PC-9 (cell line): ENCODE measurements at regions of chr18 and their contacts with region 1.

Region 1: GRCh38 chr18:1133541-1133940 is 228.9 kb downstream of the ADCYAP1 start:
- DNase-seq: no peak
- H3K4me3 ChIP-seq: no peak overlapping the region
- H3K27ac ChIP-seq: no peak overlapping the region
- H3K4me1 ChIP-seq: no peaks in the 10 kb centered on the region
- H3K27me3 ChIP-seq: no peaks in the 10 kb centered on the region
- CTCF ChIP-seq: no peak

Region 2: DNA sequence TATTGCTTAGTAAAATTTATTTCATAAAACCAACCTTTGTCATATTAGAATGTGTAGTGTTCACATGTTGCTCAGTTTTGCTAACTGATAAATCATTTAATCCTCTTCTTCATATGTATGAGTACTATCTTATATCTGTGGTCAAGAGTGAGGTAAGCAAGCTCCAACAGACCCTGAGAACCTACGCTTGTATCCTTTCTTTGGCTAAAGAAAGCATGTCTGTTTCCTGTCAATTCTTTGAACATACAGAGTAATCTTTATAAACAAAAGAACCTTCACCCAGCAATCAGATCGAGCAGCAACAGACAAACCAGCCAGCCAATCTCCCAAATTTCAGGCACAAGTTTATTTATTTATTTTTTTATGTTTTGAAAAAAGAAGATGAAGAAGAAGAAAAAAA is 222.5 kb before region 1 on chr18:
- CTCF ChIA-PET with region 1: no interaction called
- POLR2A ChIA-PET with region 1: no interaction called
- intact Hi-C with region 1: loop called (anchors 5 kb)
- DNase-seq: no peak
- H3K4me3 ChIP-seq: no peak overlapping the region
- H3K27ac ChIP-seq: no peak overlapping the region
- H3K4me1 ChIP-seq: no peaks in the 10 kb centered on the region
- H3K27me3 ChIP-seq: no peaks in the 10 kb centered on the region
- CTCF ChIP-seq: no peak

Region 3: GRCh38 chr18:1104181-1104881 is 29.2 kb before region 1 on chr18:
- CTCF ChIA-PET with region 1: no interaction called
- POLR2A ChIA-PET with region 1: no interaction called
- intact Hi-C with region 1: no loop called
- DNase-seq: no peak
- H3K4me3 ChIP-seq: no peak overlapping the region
- H3K27ac ChIP-seq: no peak overlapping the region
- H3K4me1 ChIP-seq: no peaks in the 10 kb centered on the region
- H3K27me3 ChIP-seq: no peaks in the 10 kb centered on the region
- CTCF ChIP-seq: no peak

Region 4: GRCh38 chr18:1147730-1148129 is 14.2 kb after region 1 on chr18:
- CTCF ChIA-PET with region 1: no interaction called
- POLR2A ChIA-PET with region 1: no interaction called
- intact Hi-C with region 1: no loop called
- DNase-seq: no peak
- H3K4me3 ChIP-seq: no peak overlapping the region
- H3K27ac ChIP-seq: no peak overlapping the region
- H3K4me1 ChIP-seq: no peaks in the 10 kb centered on the region
- H3K27me3 ChIP-seq: no peaks in the 10 kb centered on the region
- CTCF ChIP-seq: no peak